Common myeloid progenitor, CD34-positive (primary cell): ENCODE measurements at regions of chr14 and their contacts with region 1.

Region 1: GRCh38 chr14:59576332-59577294 is at the start of gene CCDC175:
- DNase-seq: peak; percentile 94 to 97 (median 97)
- H3K4me3 ChIP-seq: peak within 1 kb of the TSS; percentile 70 to 98 (median 91)
- H3K27ac ChIP-seq: peak within 1 kb of the TSS; percentile 78 to 90
- H3K4me1 ChIP-seq: peaks cover 3 to 41% (median 11%) of the 10 kb centered on the region in 4 experiments
- H3K27me3 ChIP-seq: no peaks in the 10 kb centered on the region

Region 2: GRCh38 chr14:59475709-59476108 is 100.9 kb before region 1 on chr14:
- CTCF ChIA-PET with region 1: interaction called, 15 read pairs
- POLR2A ChIA-PET with region 1: no interaction called
- DNase-seq: no peak
- H3K4me3 ChIP-seq: no peak overlapping the region
- H3K27ac ChIP-seq: no peak overlapping the region
- H3K4me1 ChIP-seq: peaks cover 0 to 9% (median 5%) of the 10 kb centered on the region in 4 experiments
- H3K27me3 ChIP-seq: no peaks in the 10 kb centered on the region

Region 3: GRCh38 chr14:59483900-59484638 is 92.5 kb before region 1 on chr14 and contains the starts of genes JKAMP and L3HYPDH:
- CTCF ChIA-PET with region 1: interaction called, 26 read pairs
- POLR2A ChIA-PET with region 1: interaction called, 3 read pairs
- DNase-seq: peak; percentile 97 to 99 (median 99)
- H3K4me3 ChIP-seq: peak within 1 kb of the TSS; percentile 81 to 97 (median 90)
- H3K27ac ChIP-seq: peak within 1 kb of the TSS; percentile 66 to 87
- H3K4me1 ChIP-seq: peaks cover 21 to 64% (median 43%) of the 10 kb centered on the region in 4 experiments
- H3K27me3 ChIP-seq: no peaks in the 10 kb centered on the region

Region 4: DNA sequence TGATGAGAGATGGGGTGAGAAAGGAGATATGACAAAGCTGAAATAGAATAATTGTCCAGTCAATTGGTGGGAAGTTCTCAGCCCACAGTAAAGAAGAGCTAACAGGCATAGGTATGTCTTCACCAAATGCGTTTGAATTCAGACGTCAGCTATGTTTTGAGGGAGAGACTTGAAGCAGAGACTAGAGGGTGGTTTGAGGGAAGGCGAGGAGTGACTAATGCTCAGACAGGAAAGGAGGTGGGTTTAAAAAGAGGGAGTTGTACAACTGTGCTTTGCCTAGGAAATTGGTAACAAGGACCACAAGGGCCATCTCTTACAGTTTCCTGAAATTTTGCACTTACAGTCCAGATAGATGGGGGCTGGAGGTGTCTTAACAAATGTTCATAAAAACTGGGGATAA is 85.9 kb before region 1 on chr14:
- CTCF ChIA-PET with region 1: interaction called, 536 read pairs
- POLR2A ChIA-PET with region 1: interaction called, 3 read pairs
- DNase-seq: peak in 2 of 3 donors; percentile 42 to 47
- H3K4me3 ChIP-seq: no peak overlapping the region
- H3K27ac ChIP-seq: no peak overlapping the region
- H3K4me1 ChIP-seq: peaks cover 7 to 25% (median 13%) of the 10 kb centered on the region in 4 experiments
- H3K27me3 ChIP-seq: no peaks in the 10 kb centered on the region

Region 5: GRCh38 chr14:59507063-59507780 is 69.4 kb before region 1 on chr14:
- CTCF ChIA-PET with region 1: interaction called, 536 read pairs
- POLR2A ChIA-PET with region 1: interaction called, 5 read pairs
- DNase-seq: peak; percentile 81 to 87 (median 82)
- H3K4me3 ChIP-seq: no peak overlapping the region
- H3K27ac ChIP-seq: no peak overlapping the region
- H3K4me1 ChIP-seq: peaks cover 0 to 12% (median 0%) of the 10 kb centered on the region in 4 experiments
- H3K27me3 ChIP-seq: no peaks in the 10 kb centered on the region

Region 6: DNA sequence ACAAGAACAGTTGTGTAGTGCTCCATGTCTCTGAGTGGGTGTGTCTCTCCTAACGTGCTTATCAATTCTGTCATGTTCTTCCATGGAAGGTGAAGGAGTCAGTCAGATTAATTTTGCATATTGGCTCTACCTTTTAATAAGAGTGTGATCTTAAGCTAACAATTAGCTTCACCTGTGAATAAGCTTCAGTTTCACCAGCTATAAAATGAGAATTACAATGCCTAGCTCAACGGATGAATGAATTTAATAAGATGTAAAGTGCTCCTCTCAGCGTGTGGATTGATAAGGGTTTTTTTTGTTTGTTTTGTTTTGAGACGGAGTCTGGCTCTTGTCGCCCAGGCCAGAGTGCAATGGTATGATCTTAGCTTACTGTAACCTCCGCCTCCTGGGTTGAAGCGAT is 32.7 kb before region 1 on chr14:
- CTCF ChIA-PET with region 1: interaction called, 11 read pairs
- POLR2A ChIA-PET with region 1: no interaction called
- DNase-seq: no peak
- H3K4me3 ChIP-seq: no peak overlapping the region
- H3K27ac ChIP-seq: no peak overlapping the region
- H3K4me1 ChIP-seq: peaks cover 2 to 8% (median 4%) of the 10 kb centered on the region in 4 experiments
- H3K27me3 ChIP-seq: no peaks in the 10 kb centered on the region

Region 7: DNA sequence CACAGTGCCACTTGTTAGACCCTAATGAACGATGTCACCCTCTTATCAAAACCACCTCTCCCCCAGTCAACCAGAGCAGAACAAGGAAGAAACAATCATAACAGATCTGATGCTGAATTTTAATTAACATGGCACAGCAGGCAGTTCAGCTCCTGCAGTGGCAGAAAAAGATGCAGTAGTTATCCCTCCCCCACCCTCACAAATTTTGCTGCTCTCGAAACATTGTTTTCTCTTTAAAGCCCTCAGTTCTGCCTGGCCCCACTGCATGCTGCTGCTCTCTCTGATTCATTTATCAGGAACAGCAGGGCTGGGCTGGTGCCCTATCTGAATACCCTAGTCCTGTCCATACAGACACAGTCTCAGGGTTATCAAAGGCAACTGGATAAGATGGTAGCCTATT is 12.2 kb before region 1 on chr14:
- CTCF ChIA-PET with region 1: interaction called, 47 read pairs
- POLR2A ChIA-PET with region 1: no interaction called
- DNase-seq: peak in 2 of 3 donors; percentile 34 to 50
- H3K4me3 ChIP-seq: peak overlapping the region in 5 of 7 experiments; percentile 29 to 56 (median 44)
- H3K27ac ChIP-seq: peak overlapping the region; percentile 59
- H3K4me1 ChIP-seq: peaks cover 21 to 74% (median 31%) of the 10 kb centered on the region in 4 experiments
- H3K27me3 ChIP-seq: no peaks in the 10 kb centered on the region

Region 8: DNA sequence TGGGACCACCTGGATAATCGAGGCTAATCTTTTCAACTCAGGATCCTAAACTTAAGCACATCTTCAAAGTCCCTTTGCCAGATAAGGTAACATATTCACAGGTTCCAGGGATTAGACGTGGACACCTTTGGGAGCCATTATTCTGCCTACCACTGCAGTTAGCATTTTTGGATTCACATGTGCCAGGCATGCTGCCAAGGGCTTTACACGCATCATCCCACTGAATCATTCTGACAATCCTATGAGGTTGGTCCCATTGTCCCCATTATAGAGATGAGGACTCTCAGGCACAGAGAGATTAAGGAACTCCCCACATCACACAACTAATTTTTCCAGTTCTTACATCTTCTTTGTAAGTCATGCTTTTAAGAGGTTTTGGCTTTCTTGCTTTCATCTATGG is 259.5 kb after region 1 on chr14:
- CTCF ChIA-PET with region 1: no interaction called
- POLR2A ChIA-PET with region 1: no interaction called
- DNase-seq: no peak
- H3K4me3 ChIP-seq: no peak overlapping the region
- H3K27ac ChIP-seq: no peak overlapping the region
- H3K4me1 ChIP-seq: peaks cover 0 to 6% (median under 1%) of the 10 kb centered on the region in 4 experiments
- H3K27me3 ChIP-seq: no peaks in the 10 kb centered on the region